Left colon (tissue), 2 donors: ENCODE measurements at regions of chr16 and their contacts with region 1.

Region 1: DNA sequence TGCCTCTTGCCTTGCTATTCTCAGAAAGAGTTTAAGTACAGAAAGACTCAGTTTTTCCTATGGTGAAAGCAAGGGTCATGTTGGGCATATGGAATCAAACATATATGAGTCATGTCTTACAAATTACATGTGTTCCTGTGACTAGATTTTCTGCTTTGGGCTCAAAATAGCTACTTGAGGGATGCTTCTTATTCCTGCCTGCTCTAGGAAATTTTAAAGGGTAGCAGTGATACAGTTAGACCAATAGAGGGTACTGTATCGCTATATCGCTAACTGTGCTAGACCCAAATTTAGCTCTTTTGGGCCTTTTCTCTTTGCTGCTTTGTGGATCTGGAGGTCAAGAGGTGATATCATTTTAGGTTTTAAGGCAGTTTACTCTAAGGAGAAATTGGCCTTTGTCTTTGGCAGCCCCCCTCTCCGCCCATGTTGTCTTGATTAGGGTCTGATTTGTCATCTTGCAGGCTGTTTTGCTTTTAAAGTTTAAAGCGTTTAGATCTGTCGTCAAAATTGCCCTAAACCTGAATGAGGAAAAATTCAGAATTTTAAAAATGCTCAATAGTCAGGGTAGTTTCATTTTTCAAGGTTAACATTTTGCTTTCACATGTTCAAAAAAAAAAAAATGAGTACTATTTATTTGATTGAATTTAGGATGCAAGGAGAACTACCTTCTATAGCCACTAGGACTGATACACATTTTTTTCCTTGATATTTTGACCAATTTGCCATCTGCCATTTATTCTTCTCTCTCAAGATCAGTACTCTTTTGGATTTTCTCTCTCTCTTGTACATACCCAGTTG is 8.8 kb downstream of the NFATC3 start:
- DNase-seq: no peak
- ATAC-seq: no peak

Region 2: DNA sequence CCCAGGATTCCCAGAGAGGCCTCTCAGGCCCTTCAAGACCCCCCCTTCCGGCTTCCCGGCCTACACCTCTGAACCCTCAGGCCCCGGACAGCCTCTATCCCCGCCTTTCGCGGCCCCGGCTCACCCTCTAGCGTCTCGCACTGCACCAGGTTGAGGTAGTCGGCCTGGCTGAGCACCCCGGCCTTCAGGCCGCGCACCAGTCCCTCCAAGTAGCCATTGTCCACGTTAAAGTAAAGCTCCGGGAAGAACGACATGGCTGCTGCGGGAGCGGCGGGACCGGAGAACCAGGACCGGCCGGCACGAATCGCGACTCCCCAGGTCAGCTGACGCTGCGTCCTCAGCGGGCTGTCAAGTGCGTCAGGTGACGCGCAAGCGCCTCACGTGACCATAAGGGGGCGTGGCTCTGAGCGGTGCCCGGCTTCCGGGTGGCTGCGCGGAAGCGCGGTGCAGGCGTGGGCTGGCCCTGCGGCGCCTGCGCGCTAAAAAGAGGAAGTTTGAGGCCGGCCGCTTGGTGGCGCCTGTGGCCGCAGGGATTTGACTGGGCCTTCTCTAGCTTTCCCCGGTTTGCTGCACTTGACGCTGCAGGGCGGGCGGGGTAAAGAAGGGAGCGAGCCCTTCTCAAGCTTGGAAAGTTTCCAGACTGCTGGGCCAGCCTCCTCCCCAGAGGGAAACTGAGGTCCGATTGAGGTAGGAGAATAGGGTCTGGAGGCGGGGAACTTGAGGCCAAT is 613.0 kb before region 1 on chr16 and contains the start of gene ATP6V0D1:
- intact Hi-C with region 1: no loop called
- DNase-seq: peak; percentile 98 to 100
- ATAC-seq: peak; percentile 90
- total RNA-seq, gene ATP6V0D1: 226 to 297 TPM

Region 3: GRCh38 chr16:68128577-68129305 is 34.7 kb after region 1 on chr16:
- intact Hi-C with region 1: loop called in 1 of 2 experiments (anchors 5 kb)
- DNase-seq: no peak
- ATAC-seq: no peak

Region 4: DNA sequence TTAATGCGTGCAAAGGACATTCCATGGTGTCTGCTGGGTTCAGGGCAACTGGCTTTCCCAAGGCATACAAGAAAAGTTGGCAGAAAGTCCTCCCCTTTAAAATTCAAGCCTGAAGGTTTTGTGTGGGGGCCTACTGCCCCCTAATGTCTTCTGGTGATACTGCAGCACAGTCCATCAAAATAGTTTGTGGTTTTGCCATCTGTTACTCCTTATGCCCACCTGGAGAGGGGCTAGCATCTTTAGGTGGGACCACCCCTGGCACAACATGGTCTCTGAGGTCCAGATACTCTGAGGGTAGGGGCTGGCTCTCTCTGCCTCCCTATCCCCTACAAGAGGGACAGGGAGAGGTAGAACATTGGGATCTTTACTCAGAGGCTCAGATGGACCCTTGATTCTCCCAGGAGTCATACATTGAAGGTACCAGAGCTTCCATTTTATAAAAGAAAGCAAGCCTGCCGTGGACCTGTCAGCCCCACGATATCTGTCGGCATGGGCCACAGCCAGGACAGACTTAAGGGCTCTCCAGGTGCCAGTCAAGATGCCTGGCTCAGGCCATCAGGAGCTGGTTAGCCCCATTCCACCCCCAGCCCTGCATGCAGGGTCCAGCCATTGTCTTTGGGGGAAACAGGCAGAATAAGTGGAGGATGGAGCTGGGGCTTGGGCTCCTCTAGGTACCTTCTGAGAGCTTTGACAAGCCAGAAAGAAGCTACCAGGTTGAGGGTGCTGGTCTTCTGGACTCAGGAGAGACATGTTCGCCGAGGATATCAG is 135.6 kb after region 1 on chr16:
- intact Hi-C with region 1: loop called (anchors 5 to 10 kb)
- DNase-seq: peak in 1 of 2 donors; percentile 45
- ATAC-seq: no peak